ENCODE measurements at regions of chr18 and their contacts with region 1.

Region 1: DNA sequence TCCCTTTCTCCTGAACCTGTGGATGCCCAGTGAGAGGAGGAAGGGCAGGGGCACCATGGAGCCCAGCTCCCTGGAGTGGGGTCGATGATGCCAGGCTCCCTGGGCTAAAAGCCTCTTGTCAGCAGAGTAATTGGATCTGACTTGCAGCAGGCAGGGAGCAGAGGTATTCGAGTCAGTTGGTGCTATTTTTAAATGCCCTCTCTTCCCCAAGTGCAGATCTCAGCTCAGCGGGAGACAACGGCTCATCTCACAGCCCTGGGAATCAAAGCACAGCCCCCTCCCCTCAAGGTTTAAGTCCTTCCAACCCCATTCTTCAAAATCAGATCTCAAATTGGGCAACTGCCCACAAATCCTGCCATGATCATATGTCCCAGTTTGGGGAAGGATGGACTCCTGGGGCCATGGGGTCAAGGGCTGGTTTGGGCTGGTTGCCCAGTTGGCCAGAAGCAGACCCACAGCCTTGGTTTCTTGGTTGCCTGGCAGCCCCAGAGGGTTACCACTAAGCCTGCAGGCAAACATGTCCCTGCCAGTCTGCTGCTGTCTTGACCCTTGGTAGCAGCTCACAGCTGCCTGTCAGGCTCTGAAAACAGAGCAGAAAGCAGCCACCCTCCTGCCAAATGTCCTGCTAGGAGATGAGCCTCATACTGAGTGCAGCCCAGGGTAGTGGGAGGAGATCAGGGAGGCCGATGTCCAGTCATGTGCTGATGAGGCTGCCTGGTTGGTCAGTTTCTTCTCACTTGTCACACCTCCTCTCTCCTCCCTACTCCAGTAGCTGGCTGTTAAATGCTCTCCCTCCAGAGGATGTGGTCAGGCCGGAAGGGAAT is 244.9 kb downstream of the LOXHD1 start:
- DNase-seq: no peak

Region 2: DNA sequence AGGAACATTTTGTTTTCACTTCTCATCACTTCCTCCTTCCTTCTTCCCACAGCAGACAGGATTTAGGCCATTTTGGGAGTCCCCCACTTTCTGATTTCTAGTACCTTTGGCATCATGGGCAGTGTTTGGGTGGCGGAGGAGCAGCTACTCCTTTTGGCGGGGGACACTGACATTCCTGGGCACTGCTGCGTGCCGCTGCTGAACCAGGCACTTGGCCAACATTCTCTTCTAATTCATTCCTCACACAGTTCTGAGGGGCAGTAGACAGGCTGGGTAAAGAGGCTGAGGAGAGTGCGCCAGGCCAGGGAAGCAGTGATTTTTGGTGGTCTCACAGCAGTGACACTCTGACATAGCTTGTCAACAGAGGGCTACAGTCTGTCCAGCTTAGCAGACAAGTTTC is 25.3 kb before region 1 on chr18:
- intact Hi-C with region 1: loop called (anchors 2 kb)
- DNase-seq: no peak

Region 3: DNA sequence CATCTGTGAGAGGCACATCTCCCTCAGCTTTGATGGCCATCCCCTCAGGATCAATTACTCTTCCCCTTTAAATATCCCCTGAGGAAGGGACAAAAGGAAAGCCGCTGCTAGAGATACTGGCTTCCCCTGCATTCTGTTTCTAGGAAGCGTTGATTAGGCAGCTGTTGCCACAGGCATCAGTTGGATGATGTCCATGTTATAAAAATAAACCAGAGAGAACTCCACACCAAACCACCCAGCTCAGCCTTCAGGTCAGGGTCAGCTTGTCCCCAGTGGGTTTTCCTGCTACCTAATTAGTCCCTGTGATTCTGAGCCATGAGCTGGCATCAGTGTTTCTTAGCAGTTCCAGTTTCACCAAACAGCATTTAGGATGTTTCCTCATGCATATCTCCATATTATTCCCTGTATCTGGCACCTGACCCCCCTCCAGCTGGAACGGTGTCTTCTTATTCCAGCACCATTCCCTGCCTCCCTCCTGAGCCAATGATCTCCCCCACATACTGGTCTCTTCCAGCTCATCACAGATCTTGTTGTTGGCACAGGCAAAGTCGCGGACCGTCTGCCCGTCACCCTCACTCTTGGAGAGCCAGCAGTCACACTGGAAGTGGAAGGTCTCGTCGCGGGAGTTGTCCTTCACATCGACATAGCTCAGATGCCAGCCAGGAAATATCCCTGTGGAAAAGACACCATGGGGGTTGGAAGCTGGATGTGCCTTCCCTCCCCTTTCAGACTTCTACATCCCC is 76.6 kb after region 1 on chr18:
- intact Hi-C with region 1: loop called (anchors 5 kb)
- DNase-seq: no peak